Activated B cell treated with CpG ODN at 0.5 μM for 24 hours (primary cell): ENCODE measurements at regions of chr17 and their contacts with region 1.

Region 1: DNA sequence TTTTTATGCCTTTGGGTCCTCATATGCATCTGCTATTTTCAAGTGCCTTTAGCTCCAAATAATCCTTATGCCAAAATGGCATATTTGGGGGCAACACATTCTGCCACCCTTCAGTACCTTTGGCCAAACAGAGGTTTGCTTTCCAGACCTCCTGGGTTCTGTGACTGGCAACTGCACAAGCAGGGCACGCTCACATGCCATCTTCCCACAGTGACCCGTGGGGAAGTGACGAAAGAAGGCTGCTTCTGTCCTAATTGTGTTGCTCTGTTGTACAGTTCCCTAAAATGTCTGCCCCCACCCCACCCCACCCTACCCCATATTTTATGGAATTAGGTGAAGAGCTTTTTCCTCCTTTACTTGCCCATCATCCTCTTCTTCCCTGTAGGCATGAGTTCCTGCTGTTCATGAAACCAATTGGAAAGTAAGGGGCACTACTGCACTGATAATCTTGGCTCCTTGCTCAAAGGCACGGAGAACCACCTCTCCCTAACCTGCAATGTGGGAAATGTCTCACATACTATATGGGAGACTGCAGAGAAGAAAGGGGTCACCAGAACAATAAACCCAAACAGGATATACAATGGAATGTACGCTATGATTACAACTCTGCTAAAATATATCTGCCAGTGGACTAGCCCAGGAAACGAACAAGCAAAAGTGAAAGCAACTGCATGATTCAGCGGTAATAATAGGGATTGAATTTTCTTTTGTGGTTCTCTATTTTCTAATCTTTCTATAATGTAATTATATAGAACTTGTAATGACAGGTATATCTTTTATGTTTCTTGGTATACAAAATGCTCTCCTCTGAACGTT is 3.3 kb upstream of the SLFN12L start:
- DNase-seq: peak; percentile 26
- ATAC-seq: peak; percentile 83
- H3K4me3 Mint-ChIP-seq: peak overlapping the region; percentile 88
- H3K27ac Mint-ChIP-seq: peak overlapping the region; percentile 92
- H3K4me1 Mint-ChIP-seq: peaks cover 43% of the 10 kb centered on the region
- H3K27me3 Mint-ChIP-seq: no peaks in the 10 kb centered on the region
- CTCF ChIP-seq: no peak

Region 2: GRCh38 chr17:34420254-34420766 is 1120.5 kb before region 1 on chr17:
- CTCF ChIA-PET with region 1: interaction called, 4 read pairs
- POLR2A ChIA-PET with region 1: no interaction called
- intact Hi-C with region 1: loop called (anchors 2 kb)
- DNase-seq: peak; percentile 34
- ATAC-seq: peak; percentile 45
- H3K4me3 Mint-ChIP-seq: no peak overlapping the region
- H3K27ac Mint-ChIP-seq: no peak overlapping the region
- H3K4me1 Mint-ChIP-seq: peaks cover 2% of the 10 kb centered on the region
- H3K27me3 Mint-ChIP-seq: peaks cover 28% of the 10 kb centered on the region
- CTCF ChIP-seq: peak; percentile 99

Region 3: GRCh38 chr17:35141681-35142466 is 398.9 kb before region 1 on chr17 and contains the start of gene NLE1:
- CTCF ChIA-PET with region 1: interaction called, 4 read pairs
- POLR2A ChIA-PET with region 1: no interaction called
- intact Hi-C with region 1: loop called (anchors 10 kb)
- DNase-seq: peak; percentile 87
- ATAC-seq: peak; percentile 99
- H3K4me3 Mint-ChIP-seq: peak within 1 kb of the TSS; percentile 87
- H3K27ac Mint-ChIP-seq: peak within 1 kb of the TSS; percentile 59
- H3K4me1 Mint-ChIP-seq: peaks cover 14% of the 10 kb centered on the region
- H3K27me3 Mint-ChIP-seq: peaks cover 1% of the 10 kb centered on the region
- CTCF ChIP-seq: no peak
- total RNA-seq, gene NLE1: 22.1 and 26.3 TPM in 2 replicates

Region 4: DNA sequence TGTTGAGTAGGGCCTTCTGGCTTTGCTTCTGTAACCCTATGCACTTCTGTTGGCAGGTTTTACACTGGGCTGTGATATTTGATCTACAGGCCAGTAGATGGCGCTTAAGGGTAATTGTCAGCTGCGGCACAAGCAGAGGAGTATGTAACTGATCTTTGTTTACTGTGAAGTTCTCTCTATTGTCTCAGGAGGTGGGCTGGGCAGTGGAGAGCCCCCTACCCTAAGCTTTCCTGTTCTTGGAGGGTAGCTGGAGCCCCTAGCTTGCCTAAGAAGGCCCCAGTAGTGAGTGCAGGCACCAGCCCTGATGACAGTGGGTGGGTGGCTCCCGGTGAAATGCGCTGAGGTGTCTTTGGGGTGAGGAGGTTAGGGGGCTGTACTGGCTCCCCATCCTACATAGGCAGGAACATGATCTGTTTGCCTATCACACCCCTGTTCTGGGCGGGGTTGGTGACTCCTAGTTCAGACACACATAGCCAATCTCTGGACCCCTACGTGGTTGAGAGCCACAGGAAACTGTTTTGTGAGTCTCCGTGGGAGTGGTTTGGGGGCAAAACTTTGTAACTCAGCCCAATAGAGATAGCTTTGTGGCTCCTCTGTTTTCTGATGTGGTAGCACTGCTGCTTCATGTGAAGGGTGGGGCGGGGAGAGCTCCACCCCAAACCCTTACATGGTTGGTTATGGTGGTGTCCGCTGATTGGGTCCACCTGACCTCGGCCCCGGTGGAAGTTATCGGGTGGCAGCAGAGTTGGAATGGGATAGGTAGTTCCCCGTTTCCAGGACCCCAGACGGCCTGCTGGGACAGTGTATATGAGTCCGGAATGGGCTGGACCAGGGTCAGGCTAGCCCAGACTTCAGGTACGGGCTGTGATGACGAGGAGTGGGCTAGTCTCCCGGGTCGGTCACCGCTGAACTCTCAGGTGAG is 227.7 kb before region 1 on chr17:
- CTCF ChIA-PET with region 1: interaction called, 125 read pairs
- POLR2A ChIA-PET with region 1: interaction called, 10 read pairs
- intact Hi-C with region 1: loop called (anchors 1 kb)
- DNase-seq: peak; percentile 53
- ATAC-seq: peak; percentile 87
- H3K4me3 Mint-ChIP-seq: peak overlapping the region; percentile 87
- H3K27ac Mint-ChIP-seq: peak overlapping the region; percentile 81
- H3K4me1 Mint-ChIP-seq: peaks cover 18% of the 10 kb centered on the region
- H3K27me3 Mint-ChIP-seq: no peaks in the 10 kb centered on the region
- CTCF ChIP-seq: peak; percentile 62

Region 5: DNA sequence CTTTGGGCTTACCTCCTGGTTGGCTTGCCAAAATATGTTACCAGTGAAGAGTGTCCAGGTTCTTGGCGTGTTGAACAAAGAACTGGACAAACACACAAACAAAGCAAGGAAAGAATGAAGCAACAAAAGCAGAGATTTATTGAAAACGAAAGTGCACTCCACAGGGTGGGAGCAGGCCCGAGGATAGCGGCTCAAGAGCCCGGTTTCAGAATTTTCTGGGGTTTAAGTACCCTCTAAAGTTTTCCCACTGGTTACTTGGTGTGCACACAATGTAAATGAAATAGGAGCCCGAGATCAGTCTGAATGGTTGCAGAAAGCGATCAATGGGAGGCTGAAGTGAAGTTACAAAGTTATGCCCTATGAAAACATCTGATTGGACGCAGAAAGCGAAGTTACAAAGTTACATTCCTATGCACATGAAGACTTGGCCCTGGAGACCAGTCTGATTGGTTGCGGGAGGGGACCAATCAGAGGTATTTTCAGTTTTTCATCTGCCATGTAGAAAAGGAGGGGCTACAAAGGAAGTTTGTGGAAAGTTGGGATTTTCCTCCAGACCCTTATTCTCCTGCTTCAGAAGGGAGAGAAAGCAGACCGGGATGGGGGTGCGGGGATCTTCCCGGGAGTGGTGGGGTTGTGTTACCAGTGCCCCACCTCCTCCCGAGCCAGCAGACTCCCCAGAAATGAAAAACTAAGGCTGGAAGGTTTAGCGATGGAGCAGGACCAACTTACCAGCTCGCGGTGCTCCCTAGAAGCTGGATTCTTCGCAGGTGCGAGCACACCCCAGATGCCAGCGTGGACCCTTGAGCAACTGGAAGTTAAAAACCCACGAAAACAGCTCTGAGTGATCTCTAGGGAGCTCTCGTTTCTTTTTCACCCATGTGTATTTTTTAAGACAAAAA is 108.4 kb before region 1 on chr17 and contains the start of gene SLFN12:
- CTCF ChIA-PET with region 1: no interaction called
- POLR2A ChIA-PET with region 1: no interaction called
- intact Hi-C with region 1: loop called (anchors 5 kb)
- DNase-seq: peak; percentile 29
- ATAC-seq: peak; percentile 93
- H3K4me3 Mint-ChIP-seq: peak within 1 kb of the TSS; percentile 97
- H3K27ac Mint-ChIP-seq: peak within 1 kb of the TSS; percentile 92
- H3K4me1 Mint-ChIP-seq: peaks cover 31% of the 10 kb centered on the region
- H3K27me3 Mint-ChIP-seq: no peaks in the 10 kb centered on the region
- CTCF ChIP-seq: no peak
- total RNA-seq, gene SLFN12: 8.7 and 9.0 TPM in 2 replicates

Region 6: GRCh38 chr17:35587074-35587971 is 46.5 kb after region 1 on chr17 and contains the start of gene AP2B1:
- CTCF ChIA-PET with region 1: interaction called, 4 read pairs
- POLR2A ChIA-PET with region 1: interaction called, 7 read pairs
- intact Hi-C with region 1: loop called (anchors 2 kb)
- DNase-seq: peak; percentile 97
- ATAC-seq: peak; percentile 97
- H3K4me3 Mint-ChIP-seq: peak within 1 kb of the TSS; percentile 100
- H3K27ac Mint-ChIP-seq: peak within 1 kb of the TSS; percentile 100
- H3K4me1 Mint-ChIP-seq: peaks cover 32% of the 10 kb centered on the region
- H3K27me3 Mint-ChIP-seq: peaks cover 5% of the 10 kb centered on the region
- CTCF ChIP-seq: no peak
- total RNA-seq, gene AP2B1: 129 and 152 TPM in 2 replicates

Region 7: DNA sequence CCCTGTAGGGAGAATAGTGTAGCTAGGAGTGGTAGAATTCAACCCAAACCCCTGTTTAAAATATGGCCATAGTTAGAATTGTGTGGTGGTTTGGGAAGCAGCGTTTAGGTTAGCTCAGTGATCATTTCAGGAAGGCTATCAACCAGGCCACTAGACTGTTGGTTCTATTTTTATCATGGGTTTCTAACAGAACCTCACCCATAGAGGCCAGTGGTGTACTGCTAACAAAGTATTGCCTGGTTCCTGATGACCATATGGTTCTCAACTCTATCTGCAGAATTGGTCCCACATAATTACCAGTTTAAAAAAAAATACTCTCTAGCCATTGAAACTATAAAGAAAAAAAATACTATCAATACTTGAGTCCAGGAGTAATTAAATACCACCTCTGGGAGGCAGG is 120.1 kb after region 1 on chr17:
- CTCF ChIA-PET with region 1: no interaction called
- POLR2A ChIA-PET with region 1: no interaction called
- intact Hi-C with region 1: no loop called
- DNase-seq: no peak
- ATAC-seq: no peak
- H3K4me3 Mint-ChIP-seq: no peak overlapping the region
- H3K27ac Mint-ChIP-seq: no peak overlapping the region
- H3K4me1 Mint-ChIP-seq: no peaks in the 10 kb centered on the region
- H3K27me3 Mint-ChIP-seq: no peaks in the 10 kb centered on the region
- CTCF ChIP-seq: no peak